CD8-positive, alpha-beta T cell (primary cell): ENCODE measurements at regions of chr2 and their contacts with region 1.

Region 1: DNA sequence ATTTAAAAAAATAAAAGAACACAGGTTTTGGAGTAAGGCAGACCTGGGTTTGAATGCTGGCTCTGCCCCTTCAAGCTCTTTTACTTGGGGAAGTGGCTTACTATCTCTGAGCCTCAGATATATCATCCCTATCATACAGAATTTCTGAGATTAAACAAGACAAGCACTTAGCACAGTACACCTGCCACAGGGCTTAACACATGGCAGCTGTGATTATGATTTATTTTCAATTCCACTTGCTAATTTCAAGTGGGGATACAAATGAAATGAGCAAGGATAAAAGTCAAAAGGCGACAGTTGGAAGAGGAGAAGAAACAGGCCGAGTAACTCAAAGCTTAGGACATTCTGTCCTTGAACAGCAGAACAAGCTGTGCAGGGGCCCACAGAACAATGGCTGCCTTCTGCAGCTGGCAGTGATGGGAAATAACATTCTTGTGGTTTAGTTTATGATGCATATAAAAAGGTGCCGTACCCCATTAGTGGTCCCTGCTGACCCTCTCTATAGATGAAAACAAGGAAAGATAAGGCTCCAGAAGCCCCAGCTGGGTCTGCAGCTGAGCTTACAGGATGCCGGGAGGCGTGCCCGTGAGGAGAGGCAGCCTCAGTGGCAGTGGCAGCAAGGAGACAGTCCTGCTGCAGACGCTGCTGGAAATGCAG is 45.3 kb downstream of the KIF3C start:
- DNase-seq: no peak
- ATAC-seq: no peak
- H3K4me3 ChIP-seq: no peak overlapping the region
- H3K4me3 Mint-ChIP-seq: no peak overlapping the region
- H3K27ac ChIP-seq: no peak overlapping the region
- H3K27ac Mint-ChIP-seq: no peak overlapping the region
- H3K4me1 ChIP-seq: no peaks in the 10 kb centered on the region
- H3K4me1 Mint-ChIP-seq: no peaks in the 10 kb centered on the region
- H3K27me3 ChIP-seq: no peaks in the 10 kb centered on the region
- H3K27me3 Mint-ChIP-seq: no peaks in the 10 kb centered on the region
- CTCF ChIP-seq: no peak

Region 2: GRCh38 chr2:25673300-25674076 is 263.5 kb before region 1 on chr2 and contains the start of gene DTNB:
- CTCF ChIA-PET with region 1: no interaction called
- POLR2A ChIA-PET with region 1: no interaction called
- intact Hi-C with region 1: no loop called
- DNase-seq: peak; percentile 52 to 91 (median 77)
- ATAC-seq: peak; percentile 73
- H3K4me3 ChIP-seq: peak within 1 kb of the TSS; percentile 75 to 76
- H3K4me3 Mint-ChIP-seq: peak within 1 kb of the TSS; percentile 88
- H3K27ac ChIP-seq: peak within 1 kb of the TSS; percentile 62 to 70
- H3K27ac Mint-ChIP-seq: peak within 1 kb of the TSS; percentile 83
- H3K4me1 ChIP-seq: peaks cover 15% of the 10 kb centered on the region
- H3K4me1 Mint-ChIP-seq: peaks cover 33% of the 10 kb centered on the region
- H3K27me3 ChIP-seq: no peaks in the 10 kb centered on the region
- H3K27me3 Mint-ChIP-seq: no peaks in the 10 kb centered on the region
- CTCF ChIP-seq: no peak
- total RNA-seq, gene DTNB: 27.1 to 33.2 TPM

Region 3: GRCh38 chr2:25951071-25951547 is 14.1 kb after region 1 on chr2:
- CTCF ChIA-PET with region 1: interaction called, 13 read pairs
- POLR2A ChIA-PET with region 1: no interaction called
- intact Hi-C with region 1: no loop called
- DNase-seq: peak; percentile 42 to 84 (median 67)
- ATAC-seq: peak; percentile 96
- H3K4me3 ChIP-seq: no peak overlapping the region
- H3K4me3 Mint-ChIP-seq: no peak overlapping the region
- H3K27ac ChIP-seq: no peak overlapping the region
- H3K27ac Mint-ChIP-seq: no peak overlapping the region
- H3K4me1 ChIP-seq: no peaks in the 10 kb centered on the region
- H3K4me1 Mint-ChIP-seq: peaks cover 2% of the 10 kb centered on the region
- H3K27me3 ChIP-seq: no peaks in the 10 kb centered on the region
- H3K27me3 Mint-ChIP-seq: no peaks in the 10 kb centered on the region
- CTCF ChIP-seq: peak; percentile 89